Activated naive CD4-positive, alpha-beta T cell treated with anti-CD3 and anti-CD28 coated beads, Interleukin-2, amount 10 ng/mL, durations not matched to agents 7 days and 5 days (primary cell): ENCODE measurements at regions of chr2 and their contacts with region 1.

Region 1: DNA sequence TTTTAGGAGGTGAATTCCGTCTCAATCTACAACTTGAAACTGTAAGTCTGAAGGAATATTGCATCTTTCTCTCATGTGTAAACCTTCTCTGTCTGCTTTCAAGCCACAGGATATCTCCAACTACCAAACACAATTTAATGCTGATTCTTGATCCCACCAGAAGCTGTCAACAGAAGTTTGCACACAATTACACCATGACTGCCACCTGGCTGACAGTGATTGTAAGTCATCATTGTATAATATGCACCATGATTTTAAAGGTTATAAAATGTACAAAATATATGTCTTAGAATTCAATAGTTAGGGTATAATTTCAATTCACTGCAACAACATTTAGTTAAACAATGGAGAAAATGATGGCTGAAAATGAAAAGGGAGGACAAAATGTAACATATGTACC is 18.4 kb downstream of the PREPL start:
- DNase-seq: peak; percentile 50
- H3K4me3 Mint-ChIP-seq: no peak overlapping the region
- H3K27ac Mint-ChIP-seq: no peak overlapping the region
- H3K4me1 Mint-ChIP-seq: no peaks in the 10 kb centered on the region
- H3K27me3 Mint-ChIP-seq: no peaks in the 10 kb centered on the region

Region 2: DNA sequence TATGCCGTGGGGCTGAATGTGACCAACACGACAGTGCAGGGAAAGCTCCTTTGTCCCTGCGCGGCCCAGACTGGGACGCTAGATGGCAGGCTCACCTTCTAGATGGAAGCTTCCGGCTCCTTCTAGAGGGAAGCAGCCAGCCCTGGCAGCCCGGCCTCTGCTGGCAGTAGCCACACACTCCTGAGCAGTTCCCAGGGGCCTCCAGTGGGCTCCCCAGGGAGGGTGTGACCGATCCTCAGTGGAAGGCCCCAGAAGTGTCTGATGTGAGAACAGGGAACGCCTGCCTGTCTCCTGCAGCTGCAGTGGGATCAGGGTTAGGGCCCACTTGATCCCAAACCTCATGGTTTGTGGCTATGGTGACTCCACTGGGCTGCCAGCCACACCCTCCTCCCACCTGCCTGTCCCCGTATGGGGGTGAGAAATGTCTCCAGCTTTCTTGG is 298.6 kb before region 1 on chr2:
- CTCF ChIA-PET with region 1: interaction called, 10 read pairs
- DNase-seq: peak; percentile 87
- H3K4me3 Mint-ChIP-seq: no peak overlapping the region
- H3K27ac Mint-ChIP-seq: no peak overlapping the region
- H3K4me1 Mint-ChIP-seq: no peaks in the 10 kb centered on the region
- H3K27me3 Mint-ChIP-seq: peaks cover 14% of the 10 kb centered on the region

Region 3: DNA sequence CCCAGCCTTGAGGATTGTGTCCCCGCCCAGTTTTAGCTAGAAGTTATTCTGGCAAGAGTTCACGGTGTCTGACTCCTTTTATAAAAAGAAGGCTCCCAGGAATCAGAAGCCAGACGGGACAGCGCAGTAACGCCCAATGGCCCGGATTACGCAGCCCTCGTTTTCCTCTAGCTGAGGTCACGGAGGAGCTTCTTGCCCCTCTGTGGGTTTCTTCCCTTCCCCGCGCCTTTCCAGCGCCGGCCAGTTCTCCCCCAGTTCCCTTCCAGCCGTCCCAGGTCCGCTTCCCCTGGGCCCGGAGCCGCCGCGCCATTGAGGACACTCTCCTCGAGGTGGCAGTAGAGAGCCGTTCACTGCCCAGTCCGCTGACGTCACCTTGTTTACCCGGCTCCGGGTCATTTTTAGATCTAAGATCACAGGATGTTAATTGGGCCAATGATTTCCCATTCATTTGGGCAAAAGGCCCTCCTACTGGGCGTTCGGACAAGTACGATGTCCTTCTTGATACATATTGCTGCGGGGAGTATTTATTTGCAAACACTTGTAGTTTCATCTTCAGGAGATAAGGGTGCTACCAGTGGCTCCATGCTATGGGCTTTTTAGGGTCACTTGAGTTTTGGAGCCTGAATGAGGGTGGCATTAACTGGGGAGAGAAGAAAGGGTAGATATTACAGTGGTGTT is 255.7 kb before region 1 on chr2:
- CTCF ChIA-PET with region 1: interaction called, 20 read pairs
- DNase-seq: peak; percentile 88
- H3K4me3 Mint-ChIP-seq: peak overlapping the region; percentile 63
- H3K27ac Mint-ChIP-seq: peak overlapping the region; percentile 78
- H3K4me1 Mint-ChIP-seq: peaks cover 24% of the 10 kb centered on the region
- H3K27me3 Mint-ChIP-seq: no peaks in the 10 kb centered on the region